Heart right ventricle (tissue), 16 donors: ENCODE measurements at regions of chr11 and their contacts with region 1.

Region 1: DNA sequence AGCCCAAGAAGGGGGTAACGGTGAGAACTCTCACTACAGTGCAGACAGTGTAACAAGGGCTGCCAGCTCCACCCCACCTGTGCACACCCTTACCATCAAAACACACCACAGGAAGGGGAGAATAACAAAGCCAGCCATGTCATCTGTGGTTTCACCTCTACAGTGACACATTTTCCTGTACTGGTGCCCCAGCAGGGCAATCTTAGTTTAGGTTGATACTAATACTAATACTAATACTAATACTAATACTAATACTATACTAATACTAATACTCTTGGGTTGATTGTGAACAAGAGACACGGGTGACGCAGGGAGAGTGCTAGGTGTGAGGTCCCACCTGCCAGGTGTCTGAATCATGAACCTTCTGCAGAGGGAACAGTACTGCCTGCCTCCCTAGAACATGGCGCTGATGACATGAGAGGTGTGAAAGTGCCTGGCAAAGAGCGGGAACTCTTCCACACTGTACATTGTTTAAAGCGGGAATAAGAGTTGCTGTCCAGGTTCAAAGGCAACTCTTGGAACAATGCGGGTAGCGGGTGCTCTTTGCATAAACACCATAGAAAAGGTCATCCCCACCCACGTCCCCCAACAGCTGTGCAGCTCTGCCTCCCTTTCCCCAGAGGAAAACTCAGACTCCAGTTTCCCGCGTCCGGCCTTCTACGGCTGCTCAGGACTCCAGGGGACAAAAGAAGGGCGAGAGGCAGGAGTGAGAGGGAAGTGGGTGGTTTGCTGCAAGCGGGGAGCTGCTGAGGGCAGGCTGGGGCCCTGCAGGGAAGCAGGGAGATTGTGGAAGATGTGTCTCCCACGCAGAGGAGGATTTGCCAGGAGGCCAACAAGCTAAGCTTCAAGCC is 25.0 kb upstream of the TMPRSS4 start:
- DNase-seq: no peak
- ATAC-seq: peak in 5 of 8 donors; percentile 12 to 34 (median 24)
- H3K4me3 ChIP-seq: no peak overlapping the region
- H3K27ac ChIP-seq: peak overlapping the region in 1 of 10 donors; percentile 75
- H3K4me1 ChIP-seq: peaks cover 0 to 30% (median 0%) of the 10 kb centered on the region in 9 donors
- H3K27me3 ChIP-seq: no peaks in the 10 kb centered on the region
- CTCF ChIP-seq: no peak

Region 2: DNA sequence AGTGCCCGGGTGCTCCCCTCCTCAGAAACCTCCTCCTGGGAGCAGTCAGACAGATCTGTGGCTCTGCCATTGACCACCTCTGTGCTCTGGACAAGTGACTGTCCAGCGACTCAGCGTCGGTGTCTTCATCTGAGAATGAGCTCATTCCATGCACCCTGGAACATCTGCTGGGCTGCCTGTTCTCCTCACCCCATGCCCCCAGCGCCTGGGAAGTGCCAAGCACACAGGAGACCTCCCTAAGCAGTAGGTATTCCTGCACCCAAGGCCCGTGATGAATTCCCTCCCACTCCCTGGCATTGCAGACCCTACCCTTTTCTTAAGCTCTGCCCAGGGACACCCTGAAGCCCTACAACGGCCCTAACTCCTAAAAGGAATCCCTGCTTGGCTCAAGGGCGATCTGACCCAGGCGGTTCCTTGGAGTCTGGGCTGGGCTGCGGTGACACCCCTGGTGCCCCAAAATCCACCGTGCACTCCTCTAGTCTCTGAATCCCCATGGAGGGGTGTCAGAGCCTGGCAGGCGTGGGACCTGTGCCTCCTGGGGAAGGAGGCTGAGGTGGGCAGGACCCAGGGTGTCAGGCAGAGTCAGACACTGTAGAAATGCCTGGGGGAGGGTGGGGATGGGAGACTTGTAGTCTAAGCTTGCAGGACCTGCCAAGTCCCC is 632.2 kb before region 1 on chr11:
- intact Hi-C with region 1: loop called in 6 of 10 experiments (anchors 5 to 10 kb)
- DNase-seq: no peak
- ATAC-seq: no peak
- H3K4me3 ChIP-seq: no peak overlapping the region
- H3K27ac ChIP-seq: no peak overlapping the region
- H3K4me1 ChIP-seq: no peaks in the 10 kb centered on the region
- H3K27me3 ChIP-seq: peaks cover 0 to 9% (median 0%) of the 10 kb centered on the region in 7 donors
- CTCF ChIP-seq: no peak

Region 3: DNA sequence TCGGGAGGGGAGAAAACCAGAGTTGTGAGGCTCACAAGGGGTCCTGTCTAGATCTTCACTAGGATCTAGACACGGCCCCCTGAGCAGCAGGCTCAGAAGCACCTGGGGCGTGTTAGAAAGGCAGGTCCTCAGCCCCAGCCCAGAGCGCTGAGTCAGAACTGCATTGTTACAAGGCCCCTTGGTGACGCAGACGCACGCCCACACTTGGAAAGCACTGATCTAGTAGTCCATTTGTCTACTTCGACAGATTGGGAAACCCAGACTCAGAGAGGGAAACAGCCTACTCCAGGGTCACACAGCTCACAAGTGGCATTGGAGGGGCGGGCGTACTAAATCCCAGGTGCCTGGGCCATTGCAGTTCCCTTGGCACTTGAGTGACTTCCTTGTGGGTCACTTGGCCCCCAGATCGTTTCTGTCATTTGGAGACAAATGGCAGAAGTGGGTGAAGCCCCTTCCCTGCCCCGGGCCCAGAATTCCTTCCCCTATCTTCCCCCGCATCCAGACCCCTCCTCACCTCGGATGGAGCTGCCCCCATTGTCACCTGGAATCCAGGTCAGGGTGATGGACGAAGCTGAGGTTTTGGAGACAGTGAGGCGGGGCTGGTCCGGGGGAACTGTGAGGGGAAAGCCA is 613.4 kb before region 1 on chr11:
- intact Hi-C with region 1: loop called in 2 of 10 experiments (anchors 10 kb)
- DNase-seq: no peak
- ATAC-seq: no peak
- H3K4me3 ChIP-seq: no peak overlapping the region
- H3K27ac ChIP-seq: no peak overlapping the region
- H3K4me1 ChIP-seq: peaks cover 0 to 2% (median 0%) of the 10 kb centered on the region in 9 donors
- H3K27me3 ChIP-seq: peaks cover 0 to 12% (median 0%) of the 10 kb centered on the region in 7 donors
- CTCF ChIP-seq: no peak

Region 4: DNA sequence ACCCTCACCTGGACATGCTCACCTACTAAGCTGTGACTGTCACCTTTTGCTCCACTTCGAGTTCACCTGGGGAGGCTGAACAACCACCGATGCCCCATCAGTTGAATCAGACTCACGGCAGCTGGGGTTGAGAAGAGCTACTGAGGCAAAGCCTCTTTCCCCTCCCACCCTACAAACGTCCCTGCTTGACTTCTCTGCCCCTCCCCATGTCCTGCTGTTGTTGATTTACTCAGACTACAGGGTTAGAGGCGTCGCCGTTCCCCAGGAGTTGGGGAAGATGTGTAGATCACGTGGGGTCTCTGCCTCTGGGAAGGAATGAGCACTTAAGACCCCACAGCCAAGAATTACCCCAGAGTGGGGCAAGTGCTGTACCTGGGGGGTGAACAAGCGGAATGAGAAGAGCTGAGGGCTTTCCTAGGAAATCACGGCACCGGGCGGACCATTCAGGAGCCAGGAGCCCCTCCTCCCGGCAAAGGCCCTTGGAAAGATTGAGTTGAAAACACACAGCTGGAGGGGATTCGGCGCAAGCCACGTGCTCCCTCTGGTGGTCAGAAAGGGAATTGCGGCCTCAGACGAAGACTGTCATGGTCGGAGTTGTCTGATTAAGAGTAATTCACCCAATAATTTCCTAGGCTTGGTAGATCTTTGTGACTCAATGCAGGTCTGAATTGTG is 234.3 kb before region 1 on chr11:
- intact Hi-C with region 1: loop called in 2 of 10 experiments (anchors 5 kb)
- DNase-seq: peak; percentile 82 to 83
- ATAC-seq: peak; percentile 58 to 78 (median 70)
- H3K4me3 ChIP-seq: peak overlapping the region in 3 of 10 donors; percentile 22 to 36 (median 34)
- H3K27ac ChIP-seq: peak overlapping the region in 7 of 10 donors; percentile 31 to 80 (median 65)
- H3K4me1 ChIP-seq: peaks cover 0 to 58% (median 27%) of the 10 kb centered on the region in 9 donors
- H3K27me3 ChIP-seq: no peaks in the 10 kb centered on the region
- CTCF ChIP-seq: peak; percentile 96 to 100 (median 99)

Region 5: GRCh38 chr11:117946842-117947526 is 104.9 kb before region 1 on chr11:
- intact Hi-C with region 1: loop called (anchors 2 to 10 kb)
- DNase-seq: peak; percentile 91 to 92
- ATAC-seq: peak; percentile 91 to 98 (median 96)
- H3K4me3 ChIP-seq: no peak overlapping the region
- H3K27ac ChIP-seq: no peak overlapping the region
- H3K4me1 ChIP-seq: peaks cover 0 to 56% (median 24%) of the 10 kb centered on the region in 9 donors
- H3K27me3 ChIP-seq: peaks cover 0 to 8% (median 0%) of the 10 kb centered on the region in 7 donors
- CTCF ChIP-seq: peak; percentile 94 to 99 (median 98)